SK-N-SH (cell line): ENCODE measurements at regions of chr1 and their contacts with region 1.

Region 1: DNA sequence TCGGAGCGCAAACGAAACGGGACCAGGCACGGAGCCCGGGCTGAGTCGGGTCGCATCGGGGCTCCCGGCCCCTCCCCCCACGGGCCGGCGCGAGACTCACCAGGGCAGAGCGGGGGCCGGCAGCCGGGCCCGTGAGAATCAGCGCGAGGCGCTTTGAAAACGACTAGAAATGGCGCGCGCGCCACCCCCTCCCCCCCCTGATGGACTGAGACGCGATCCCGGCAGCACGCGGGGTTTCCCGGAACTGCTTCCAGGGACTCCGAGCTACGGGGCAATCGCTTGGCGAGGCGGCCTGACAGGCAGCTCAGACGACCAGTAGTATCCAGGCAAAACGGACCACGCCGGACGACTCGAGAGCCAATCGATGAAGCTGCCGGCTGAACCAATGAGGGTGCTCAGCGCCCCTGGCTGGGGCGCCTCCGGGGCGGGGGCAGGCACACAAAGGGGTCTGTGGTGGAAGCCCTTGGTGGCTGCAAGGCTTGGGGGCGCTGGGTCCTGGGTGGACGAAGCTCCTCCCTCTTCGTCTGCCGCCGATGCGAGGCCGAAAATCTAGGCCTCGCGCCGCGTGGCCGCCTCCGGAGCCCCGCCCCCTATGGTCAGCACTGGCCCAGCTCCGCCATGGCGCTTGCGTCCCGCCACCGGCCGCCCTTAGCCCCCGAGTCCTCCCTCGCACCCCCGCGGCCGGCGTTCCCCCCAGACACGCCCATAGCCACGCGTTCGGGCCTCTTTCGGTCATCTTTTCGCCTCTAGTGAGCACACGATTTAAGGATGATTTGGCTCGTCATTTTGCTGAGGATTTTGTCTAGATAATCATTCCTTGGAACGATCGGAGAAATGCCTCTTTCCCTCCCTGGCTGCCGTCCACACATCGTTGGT is at the start of gene HNRNPR:
- DNase-seq: peak; percentile 97
- H3K4me3 ChIP-seq: peak within 1 kb of the TSS; percentile 73 to 95
- H3K27ac ChIP-seq: peak within 1 kb of the TSS; percentile 98 to 99
- H3K4me1 ChIP-seq: peaks cover 5 to 15% of the 10 kb centered on the region in 2 experiments; a peak in 3 of 4 replicates
- H3K27me3 ChIP-seq: no peaks in the 10 kb centered on the region
- CTCF ChIP-seq: no peak
- EP300 ChIP-seq: no peak; a peak in 1 of 4 replicates
- RAD21 ChIP-seq: no peak
- polyA plus RNA-seq, gene HNRNPR: 111 and 141 TPM in 2 replicates

Region 2: DNA sequence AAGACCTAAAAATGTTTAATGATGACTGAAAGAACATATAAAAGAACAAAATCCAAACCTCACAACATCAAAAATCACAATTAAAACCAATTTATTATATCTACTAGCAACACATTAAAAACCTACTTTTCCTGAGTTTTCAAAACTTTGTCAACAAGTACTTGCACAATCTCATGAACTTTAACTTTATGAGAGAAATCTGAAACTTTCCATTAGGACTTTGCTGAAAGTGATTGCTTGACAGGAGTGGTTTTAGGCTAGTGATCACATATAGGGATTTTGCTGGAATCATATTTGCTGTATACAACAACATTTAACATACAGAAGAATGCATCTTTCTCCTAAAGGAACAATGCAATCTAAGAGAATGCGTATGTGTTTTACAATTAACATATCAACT is 13.5 kb before region 1 on chr1:
- CTCF ChIA-PET with region 1: interaction called, 13 read pairs
- POLR2A ChIA-PET with region 1: interaction called, 9 read pairs
- DNase-seq: no peak
- H3K4me3 ChIP-seq: no peak overlapping the region
- H3K27ac ChIP-seq: no peak overlapping the region
- H3K4me1 ChIP-seq: no peaks in the 10 kb centered on the region
- H3K27me3 ChIP-seq: no peaks in the 10 kb centered on the region
- CTCF ChIP-seq: no peak
- EP300 ChIP-seq: no peak
- RAD21 ChIP-seq: no peak

Region 3: GRCh38 chr1:23367791-23368561 is 23.6 kb after region 1 on chr1:
- CTCF ChIA-PET with region 1: interaction called, 6 read pairs
- POLR2A ChIA-PET with region 1: interaction called, 37 read pairs
- DNase-seq: peak; percentile 97
- H3K4me3 ChIP-seq: peak overlapping the region; percentile 94 to 97
- H3K27ac ChIP-seq: peak overlapping the region; percentile 92 to 99
- H3K4me1 ChIP-seq: peaks cover 15 to 30% of the 10 kb centered on the region in 2 experiments
- H3K27me3 ChIP-seq: no peaks in the 10 kb centered on the region
- CTCF ChIP-seq: no peak
- EP300 ChIP-seq: no peak
- RAD21 ChIP-seq: no peak

Region 4: DNA sequence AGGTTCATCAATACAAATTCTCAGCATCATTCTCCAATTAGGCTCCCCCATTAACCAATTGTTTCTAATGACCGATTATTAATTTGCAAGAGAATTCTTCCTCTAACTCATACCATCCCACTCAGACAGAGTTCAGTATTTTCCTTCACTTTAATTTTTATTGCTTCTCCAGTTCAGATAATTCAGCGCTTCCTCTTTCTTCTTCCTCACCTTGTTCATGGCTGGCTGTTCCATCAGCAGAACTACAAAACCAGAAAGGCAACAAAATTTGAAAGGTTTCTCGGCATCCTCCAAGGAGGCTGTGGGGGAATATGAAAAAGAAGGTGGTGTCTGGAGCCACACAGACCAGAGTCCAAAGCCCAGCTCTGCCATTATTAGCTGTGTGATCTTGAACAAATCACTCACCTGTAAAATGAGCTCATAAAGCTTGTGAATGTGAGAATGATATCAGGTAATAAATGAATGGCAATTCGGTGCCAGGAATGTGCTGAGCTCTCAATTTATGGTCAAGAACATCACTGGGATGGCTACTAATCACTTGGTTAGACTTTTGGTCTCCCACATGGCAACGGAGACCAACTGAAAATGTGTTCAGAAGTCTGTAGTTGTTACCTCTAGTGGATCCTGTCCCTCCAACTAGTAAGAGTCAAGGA is 37.0 kb after region 1 on chr1:
- CTCF ChIA-PET with region 1: no interaction called
- POLR2A ChIA-PET with region 1: no interaction called
- DNase-seq: no peak
- H3K4me3 ChIP-seq: no peak overlapping the region
- H3K27ac ChIP-seq: no peak overlapping the region
- H3K4me1 ChIP-seq: peaks cover 0 to 20% of the 10 kb centered on the region in 2 experiments; a peak in 3 of 4 replicates
- H3K27me3 ChIP-seq: no peaks in the 10 kb centered on the region
- CTCF ChIP-seq: no peak
- EP300 ChIP-seq: no peak
- RAD21 ChIP-seq: no peak